ENCODE measurements at regions of chr17 and their contacts with region 1.

Region 1: DNA sequence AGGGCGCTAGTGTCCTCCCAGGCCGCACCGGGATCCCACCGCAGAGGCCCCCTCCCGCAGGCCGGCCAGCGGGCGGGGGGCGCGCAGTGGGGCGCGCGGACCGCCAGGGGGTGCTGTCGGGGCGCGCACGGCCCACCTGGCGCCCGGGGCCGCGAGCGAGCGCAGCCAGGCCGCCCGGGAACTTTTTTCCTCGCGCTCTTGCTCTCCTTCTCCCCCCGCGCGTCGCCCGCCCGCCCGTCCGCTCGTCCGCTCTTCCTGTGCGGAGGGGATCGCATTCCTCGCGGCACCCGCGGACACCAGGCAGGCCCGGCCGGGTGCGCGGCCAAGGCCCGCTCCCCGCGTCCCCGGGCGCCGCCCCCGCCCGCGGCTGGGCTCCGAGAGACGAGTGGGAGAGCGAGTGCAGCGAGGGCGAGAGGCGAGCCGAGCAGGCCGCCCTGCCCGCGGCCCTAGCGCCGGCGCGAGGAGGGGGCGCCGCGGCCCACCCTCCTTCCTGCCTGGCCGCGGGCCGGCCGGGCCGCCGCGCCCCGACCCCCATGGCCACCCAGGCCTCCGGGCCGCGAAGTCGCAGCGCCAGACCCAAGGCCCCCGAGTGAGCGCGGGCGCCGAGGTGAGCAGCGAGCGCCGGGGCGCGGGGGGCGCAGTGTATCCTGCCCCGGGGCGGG is at the start of gene RAI1:
- DNase-seq: peak; percentile 51 to 89 (median 73)
- ATAC-seq: peak; percentile 58
- H3K4me3 ChIP-seq: peak within 1 kb of the TSS; percentile 74
- H3K4me3 Mint-ChIP-seq: peak within 1 kb of the TSS; percentile 93
- H3K27ac ChIP-seq: peak within 1 kb of the TSS; percentile 67 to 90
- H3K27ac Mint-ChIP-seq: peak within 1 kb of the TSS; percentile 77
- H3K4me1 ChIP-seq: peaks cover 34% of the 10 kb centered on the region
- H3K4me1 Mint-ChIP-seq: peaks cover 34% of the 10 kb centered on the region
- H3K27me3 ChIP-seq: no peaks in the 10 kb centered on the region
- H3K27me3 Mint-ChIP-seq: no peaks in the 10 kb centered on the region
- CTCF ChIP-seq: peak; percentile 50
- total RNA-seq, gene RAI1: 22.9 to 23.5 TPM

Region 2: DNA sequence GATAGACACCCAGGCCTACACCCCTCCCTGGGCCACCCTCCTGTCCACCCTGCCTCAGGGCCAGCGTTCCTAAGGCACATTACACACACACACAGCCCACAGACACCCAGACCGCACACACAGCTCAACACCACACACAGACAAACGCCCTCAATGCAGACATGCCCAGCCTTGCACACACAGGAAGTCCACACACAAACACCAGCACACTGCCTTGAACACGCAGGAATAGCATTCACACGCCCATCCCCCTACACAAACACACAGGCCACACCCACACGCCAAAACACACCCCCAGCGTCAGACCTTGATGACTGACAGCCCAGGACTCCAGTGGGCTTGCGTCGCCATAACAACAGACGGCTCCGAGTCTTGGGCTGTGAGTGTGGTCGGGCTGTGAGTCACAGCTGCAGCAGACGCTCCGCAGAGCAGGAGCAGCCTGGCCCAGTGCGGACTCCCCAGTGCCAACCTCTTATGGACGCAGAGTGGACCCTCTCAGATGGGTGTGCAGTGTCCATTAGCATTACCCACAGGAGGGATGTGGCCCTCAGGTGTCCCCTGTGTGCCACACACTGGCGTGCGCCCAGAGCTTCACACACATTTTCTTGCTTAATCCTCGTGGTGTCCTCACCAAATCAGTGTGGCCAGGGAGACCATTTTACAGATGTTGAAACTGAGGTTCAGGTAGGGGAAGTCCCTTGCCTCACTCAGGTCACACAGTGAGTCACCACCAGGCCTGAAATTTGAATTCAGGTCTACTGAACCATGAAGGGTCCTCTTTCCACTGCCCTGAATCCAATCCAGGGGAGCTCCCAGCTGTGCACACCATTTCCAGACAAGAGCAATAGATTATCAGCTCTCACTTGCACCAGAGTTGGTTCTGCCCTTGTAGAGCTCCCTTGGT is 17.9 kb before region 1 on chr17:
- CTCF ChIA-PET with region 1: interaction called, 9 read pairs
- POLR2A ChIA-PET with region 1: no interaction called
- intact Hi-C with region 1: loop called in 1 of 2 experiments (anchors 1 kb)
- DNase-seq: peak; percentile 65 to 96 (median 84)
- ATAC-seq: peak; percentile 89
- H3K4me3 ChIP-seq: peak overlapping the region in 1 of 2 experiments; percentile 23
- H3K4me3 Mint-ChIP-seq: peak overlapping the region; percentile 2
- H3K27ac ChIP-seq: peak overlapping the region; percentile 42 to 72
- H3K27ac Mint-ChIP-seq: peak overlapping the region; percentile 61
- H3K4me1 ChIP-seq: peaks cover 15% of the 10 kb centered on the region
- H3K4me1 Mint-ChIP-seq: peaks cover 18% of the 10 kb centered on the region
- H3K27me3 ChIP-seq: no peaks in the 10 kb centered on the region
- H3K27me3 Mint-ChIP-seq: no peaks in the 10 kb centered on the region
- CTCF ChIP-seq: no peak

Region 3: GRCh38 chr17:17729620-17730249 is 48.4 kb after region 1 on chr17:
- CTCF ChIA-PET with region 1: no interaction called
- POLR2A ChIA-PET with region 1: no interaction called
- intact Hi-C with region 1: loop called (anchors 2 to 5 kb)
- DNase-seq: peak; percentile 29 to 78 (median 67)
- ATAC-seq: peak; percentile 90
- H3K4me3 ChIP-seq: no peak overlapping the region
- H3K4me3 Mint-ChIP-seq: no peak overlapping the region
- H3K27ac ChIP-seq: no peak overlapping the region
- H3K27ac Mint-ChIP-seq: peak overlapping the region; percentile 58
- H3K4me1 ChIP-seq: peaks cover 33% of the 10 kb centered on the region
- H3K4me1 Mint-ChIP-seq: peaks cover 31% of the 10 kb centered on the region
- H3K27me3 ChIP-seq: no peaks in the 10 kb centered on the region
- H3K27me3 Mint-ChIP-seq: no peaks in the 10 kb centered on the region
- CTCF ChIP-seq: peak; percentile 59

Region 4: DNA sequence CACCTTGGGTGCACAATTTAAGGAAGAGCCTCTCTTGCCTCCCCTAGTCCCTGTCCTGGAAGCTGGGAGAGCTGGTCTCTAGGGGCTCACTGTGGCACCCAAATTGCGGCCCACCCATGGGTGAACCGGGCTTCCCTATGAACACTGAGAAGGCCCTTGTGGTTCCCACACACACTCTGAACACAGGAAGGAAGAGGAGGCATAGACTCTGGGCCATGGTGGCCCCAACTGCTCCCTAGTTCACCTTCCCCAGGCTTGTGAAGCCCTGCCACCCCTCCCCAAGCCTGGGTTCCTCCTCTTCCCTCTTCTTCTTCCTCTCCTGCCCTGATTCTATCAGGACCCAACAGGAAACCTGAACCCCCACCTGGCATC is 145.0 kb after region 1 on chr17:
- CTCF ChIA-PET with region 1: no interaction called
- POLR2A ChIA-PET with region 1: no interaction called
- intact Hi-C with region 1: no loop called
- DNase-seq: peak in 1 of 9 experiments; percentile 55
- ATAC-seq: no peak
- H3K4me3 ChIP-seq: peak overlapping the region in 1 of 2 experiments; percentile 9
- H3K4me3 Mint-ChIP-seq: peak overlapping the region; percentile 54
- H3K27ac ChIP-seq: peak overlapping the region in 1 of 2 experiments; percentile 73
- H3K27ac Mint-ChIP-seq: peak overlapping the region; percentile 92
- H3K4me1 ChIP-seq: peaks cover 89% of the 10 kb centered on the region
- H3K4me1 Mint-ChIP-seq: peaks cover 79% of the 10 kb centered on the region
- H3K27me3 ChIP-seq: no peaks in the 10 kb centered on the region
- H3K27me3 Mint-ChIP-seq: no peaks in the 10 kb centered on the region
- CTCF ChIP-seq: no peak

Region 5: GRCh38 chr17:17859909-17860765 is 178.8 kb after region 1 on chr17:
- CTCF ChIA-PET with region 1: interaction called, 41 read pairs
- POLR2A ChIA-PET with region 1: interaction called, 3 read pairs
- intact Hi-C with region 1: loop called (anchors 1 kb)
- DNase-seq: peak; percentile 45 to 84 (median 71)
- ATAC-seq: peak; percentile 98
- H3K4me3 ChIP-seq: no peak overlapping the region
- H3K4me3 Mint-ChIP-seq: no peak overlapping the region
- H3K27ac ChIP-seq: no peak overlapping the region
- H3K27ac Mint-ChIP-seq: no peak overlapping the region
- H3K4me1 ChIP-seq: peaks cover 44% of the 10 kb centered on the region
- H3K4me1 Mint-ChIP-seq: peaks cover 38% of the 10 kb centered on the region
- H3K27me3 ChIP-seq: no peaks in the 10 kb centered on the region
- H3K27me3 Mint-ChIP-seq: no peaks in the 10 kb centered on the region
- CTCF ChIP-seq: peak; percentile 93

Region 6: DNA sequence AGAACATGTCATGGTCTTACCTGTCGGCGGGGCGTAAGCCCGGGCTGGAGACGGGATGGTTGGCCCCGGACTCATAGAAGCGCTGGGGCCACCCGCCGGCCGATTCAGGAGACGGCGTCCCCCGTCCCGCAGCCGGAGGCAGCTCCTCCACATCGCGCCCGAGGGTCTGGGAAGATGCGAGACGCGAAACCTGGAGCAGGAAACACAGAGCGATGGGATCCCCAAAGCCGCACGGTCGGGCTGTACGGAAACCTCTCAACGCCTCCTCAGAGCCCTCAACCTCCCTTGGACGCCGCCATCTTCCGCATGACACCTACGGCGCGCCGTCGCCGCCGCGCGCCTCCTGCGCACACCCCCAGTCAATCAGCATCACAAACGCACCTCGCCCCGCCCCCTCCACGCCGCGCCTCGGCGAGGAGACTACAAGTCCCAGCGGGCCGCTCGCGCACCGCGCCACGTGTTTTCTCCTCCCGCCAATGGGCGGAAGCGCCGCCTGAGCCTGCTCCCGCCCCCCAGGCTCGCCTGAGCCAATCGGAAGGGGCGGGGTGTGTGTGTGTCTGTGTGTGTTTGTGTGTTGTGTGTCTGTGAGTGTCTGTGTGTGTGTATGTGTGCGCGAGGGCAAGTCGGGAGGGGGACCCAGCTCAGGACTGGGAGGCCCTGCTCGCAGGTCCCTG is 357.7 kb after region 1 on chr17 and contains the starts of genes ATPAF2 and GID4:
- CTCF ChIA-PET with region 1: interaction called, 17 read pairs
- POLR2A ChIA-PET with region 1: no interaction called
- intact Hi-C with region 1: loop called (anchors 2 kb)
- DNase-seq: peak; percentile 99 to 100 (median 100)
- ATAC-seq: peak; percentile 90
- H3K4me3 ChIP-seq: peak within 1 kb of the TSS; percentile 85 to 92
- H3K4me3 Mint-ChIP-seq: peak within 1 kb of the TSS; percentile 92
- H3K27ac ChIP-seq: peak within 1 kb of the TSS; percentile 63 to 84
- H3K27ac Mint-ChIP-seq: peak within 1 kb of the TSS; percentile 91
- H3K4me1 ChIP-seq: peaks cover 34% of the 10 kb centered on the region
- H3K4me1 Mint-ChIP-seq: peaks cover 56% of the 10 kb centered on the region
- H3K27me3 ChIP-seq: no peaks in the 10 kb centered on the region
- H3K27me3 Mint-ChIP-seq: no peaks in the 10 kb centered on the region
- CTCF ChIP-seq: no peak
- total RNA-seq, gene ATPAF2: 16.8 to 24.5 TPM
- total RNA-seq, gene GID4: 2.7 to 5.0 TPM

Region 7: DNA sequence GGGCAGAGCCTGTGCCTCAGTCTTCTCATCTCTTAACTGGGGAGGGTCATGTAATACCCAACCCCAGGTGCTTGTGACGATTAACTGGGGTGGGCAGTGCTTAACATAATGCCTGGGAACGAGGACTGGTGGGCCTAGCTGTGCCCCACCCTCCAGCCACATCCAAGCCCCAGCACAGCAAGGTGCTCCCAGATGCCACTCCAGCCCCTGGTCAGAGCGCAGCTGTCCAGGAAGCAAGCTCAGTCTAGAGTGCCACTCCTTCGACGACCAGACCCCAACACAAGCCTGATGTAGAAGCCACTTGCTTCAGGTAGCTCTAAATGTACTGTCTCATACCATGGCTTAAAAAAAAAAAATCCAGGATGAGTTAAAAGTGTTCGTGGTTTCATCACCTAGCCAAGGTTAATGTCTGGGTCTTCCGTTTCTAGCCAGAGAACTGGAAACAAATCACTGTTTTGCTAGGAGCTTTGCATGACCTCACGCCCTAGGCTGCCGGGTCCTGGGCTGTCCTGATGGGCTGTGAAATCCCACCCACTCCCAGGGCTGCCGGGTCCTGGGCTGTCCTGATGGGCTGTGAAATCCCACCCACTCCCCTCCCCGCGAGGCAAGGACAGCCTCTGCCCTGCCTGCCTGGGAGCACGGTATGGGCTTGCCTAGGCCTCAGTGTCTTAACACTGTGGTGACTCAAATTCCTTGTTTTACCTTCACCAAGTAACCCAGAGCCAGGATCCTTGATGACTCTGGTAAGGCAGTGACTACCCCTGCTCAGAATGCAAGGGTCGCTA is 586.8 kb after region 1 on chr17:
- CTCF ChIA-PET with region 1: no interaction called
- POLR2A ChIA-PET with region 1: no interaction called
- intact Hi-C with region 1: no loop called
- DNase-seq: peak in 1 of 9 experiments; percentile 20
- ATAC-seq: peak; percentile 26
- H3K4me3 ChIP-seq: no peak overlapping the region
- H3K4me3 Mint-ChIP-seq: no peak overlapping the region
- H3K27ac ChIP-seq: no peak overlapping the region
- H3K27ac Mint-ChIP-seq: no peak overlapping the region
- H3K4me1 ChIP-seq: no peaks in the 10 kb centered on the region
- H3K4me1 Mint-ChIP-seq: peaks cover 9% of the 10 kb centered on the region
- H3K27me3 ChIP-seq: no peaks in the 10 kb centered on the region
- H3K27me3 Mint-ChIP-seq: no peaks in the 10 kb centered on the region
- CTCF ChIP-seq: no peak